ENCODE measurements at regions of chr9 and their contacts with region 1.

Region 1: DNA sequence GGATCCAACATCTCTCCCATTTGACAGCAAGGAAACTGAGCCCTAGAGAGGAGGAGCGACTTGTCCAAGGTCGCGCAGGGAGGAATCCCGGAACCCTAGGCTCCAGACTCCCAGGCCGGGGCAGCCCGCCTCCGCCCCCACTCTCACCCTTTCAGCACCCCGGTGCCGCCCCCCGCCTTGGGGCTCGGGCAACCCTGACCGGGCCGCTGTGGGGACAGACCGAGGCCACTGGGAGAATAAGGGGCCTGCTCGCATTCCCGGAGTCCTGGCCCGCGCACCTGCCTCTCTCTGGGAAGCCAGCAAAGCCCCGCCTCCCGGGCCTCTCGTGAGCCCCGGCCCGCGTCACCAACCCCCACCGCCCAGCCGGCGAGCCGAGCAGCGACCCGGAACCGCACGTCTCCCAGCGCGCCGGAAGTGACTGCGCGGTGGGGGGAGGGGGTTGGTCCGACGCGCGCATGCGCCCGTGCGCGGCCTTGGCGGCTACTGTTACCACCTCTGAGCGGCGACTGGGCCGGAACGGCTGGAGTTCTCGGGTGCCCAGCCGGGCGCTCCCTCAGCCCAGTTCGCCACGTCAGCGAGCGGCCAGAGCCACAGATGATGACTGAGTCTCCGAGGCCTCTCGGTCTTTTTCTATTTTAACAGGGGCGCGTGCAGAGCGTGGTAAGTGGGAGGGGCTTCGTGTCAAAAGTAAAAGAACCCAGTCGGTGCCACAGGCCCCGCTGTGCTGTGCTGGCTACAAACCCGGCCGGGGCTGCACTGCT is at the start of gene GOLGA1:
- DNase-seq: peak; percentile 94
- ATAC-seq: peak; percentile 86
- H3K4me3 Mint-ChIP-seq: peak within 1 kb of the TSS; percentile 99
- H3K27ac Mint-ChIP-seq: peak within 1 kb of the TSS; percentile 98
- H3K4me1 Mint-ChIP-seq: peaks cover 24% of the 10 kb centered on the region
- H3K27me3 Mint-ChIP-seq: no peaks in the 10 kb centered on the region
- total RNA-seq, gene GOLGA1: 23.4 to 26.8 TPM

Region 2: DNA sequence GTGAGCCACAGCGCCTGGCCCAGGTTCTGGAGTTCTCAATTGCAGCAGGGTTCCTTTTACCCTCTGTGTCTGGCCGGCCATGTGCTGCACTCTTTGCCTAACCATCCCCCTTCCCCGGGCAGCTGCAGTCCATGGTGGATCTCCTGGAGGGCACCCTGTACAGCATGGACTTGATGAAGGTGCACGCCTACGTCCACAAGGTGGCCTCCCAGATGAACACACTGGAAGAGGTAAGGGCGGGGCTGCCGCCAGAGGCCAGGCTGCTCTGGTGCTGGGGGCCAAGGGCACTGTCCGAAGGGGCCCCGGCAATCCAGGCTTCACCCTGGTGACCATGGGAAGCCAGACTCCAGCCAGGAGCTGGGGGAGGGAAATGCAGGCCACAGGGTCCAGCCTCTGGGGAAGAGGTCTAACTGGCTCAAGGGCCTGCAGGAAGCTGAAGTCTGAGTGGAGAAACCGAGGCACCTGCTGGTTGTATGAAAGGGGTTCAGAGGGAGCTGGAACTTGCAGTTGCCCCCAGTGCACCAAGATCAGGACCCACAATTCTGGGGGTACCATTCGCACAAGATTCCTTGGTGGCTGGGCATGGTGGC is 145.9 kb before region 1 on chr9:
- POLR2A ChIA-PET with region 1: no interaction called
- DNase-seq: no peak
- ATAC-seq: no peak
- H3K4me3 Mint-ChIP-seq: no peak overlapping the region
- H3K27ac Mint-ChIP-seq: no peak overlapping the region
- H3K4me1 Mint-ChIP-seq: peaks cover 3% of the 10 kb centered on the region
- H3K27me3 Mint-ChIP-seq: peaks cover 23% of the 10 kb centered on the region

Region 3: DNA sequence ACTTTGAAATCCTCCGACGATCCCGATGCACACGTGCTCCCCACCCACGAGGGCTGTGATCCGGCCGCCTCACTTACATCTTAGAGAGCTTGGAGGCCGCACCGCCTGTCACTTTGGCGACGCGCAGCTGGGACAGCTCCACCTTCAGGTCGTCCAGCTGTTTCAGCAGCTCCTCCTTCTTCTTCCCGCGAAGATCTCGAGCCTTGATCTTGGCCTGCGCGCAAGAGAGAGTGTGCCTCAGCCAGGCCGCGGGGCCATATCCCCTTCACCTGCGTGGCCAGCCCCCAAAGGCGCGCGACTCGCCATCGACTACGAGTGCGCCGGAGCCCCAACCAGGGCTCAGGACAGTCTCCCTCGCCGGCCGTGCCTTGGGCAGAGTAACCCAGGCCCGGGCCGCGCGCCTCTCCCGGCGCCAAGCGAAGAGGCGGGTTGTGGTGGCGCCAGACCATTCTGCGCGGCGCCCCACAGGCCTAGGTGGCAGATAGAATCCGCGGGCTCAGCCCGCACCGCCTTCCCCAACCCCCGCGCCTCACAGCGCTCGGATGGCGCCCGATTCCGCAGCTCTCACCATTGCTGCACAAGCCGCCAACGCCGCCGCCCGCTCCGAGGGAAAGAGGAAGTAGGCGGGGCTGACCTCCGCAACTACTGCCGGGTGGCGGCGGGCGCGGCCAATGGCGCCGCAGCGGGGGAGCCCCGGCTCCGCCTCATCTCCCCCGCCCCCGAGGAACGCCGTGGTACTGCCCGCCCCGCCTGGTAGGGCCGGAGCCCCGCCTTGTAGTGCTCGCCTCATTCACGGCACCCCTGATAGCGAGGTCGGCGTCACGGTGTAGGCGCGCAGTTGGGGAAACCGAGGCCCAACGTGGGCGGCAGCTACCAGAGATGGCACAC is 79.3 kb before region 1 on chr9 and contains the starts of genes ARPC5L and RPL35:
- POLR2A ChIA-PET with region 1: interaction called, 18 read pairs
- DNase-seq: peak; percentile 97
- ATAC-seq: peak; percentile 95
- H3K4me3 Mint-ChIP-seq: peak within 1 kb of the TSS; percentile 91
- H3K27ac Mint-ChIP-seq: peak within 1 kb of the TSS; percentile 98
- H3K4me1 Mint-ChIP-seq: peaks cover 23% of the 10 kb centered on the region
- H3K27me3 Mint-ChIP-seq: no peaks in the 10 kb centered on the region
- total RNA-seq, gene ARPC5L: 68.2 to 70.2 TPM
- total RNA-seq, gene RPL35: 1,398 to 1,411 TPM

Region 4: GRCh38 chr9:124868511-124869465 is 72.1 kb before region 1 on chr9:
- POLR2A ChIA-PET with region 1: interaction called, 10 read pairs
- DNase-seq: peak; percentile 97
- ATAC-seq: peak; percentile 72
- H3K4me3 Mint-ChIP-seq: peak overlapping the region; percentile 98
- H3K27ac Mint-ChIP-seq: peak overlapping the region; percentile 98
- H3K4me1 Mint-ChIP-seq: peaks cover 38% of the 10 kb centered on the region
- H3K27me3 Mint-ChIP-seq: no peaks in the 10 kb centered on the region

Region 5: GRCh38 chr9:124964604-124965003 is 23.7 kb after region 1 on chr9:
- POLR2A ChIA-PET with region 1: interaction called, 28 read pairs
- DNase-seq: no peak
- ATAC-seq: no peak
- H3K4me3 Mint-ChIP-seq: peak overlapping the region; percentile 9
- H3K27ac Mint-ChIP-seq: peak overlapping the region; percentile 92
- H3K4me1 Mint-ChIP-seq: peaks cover 18% of the 10 kb centered on the region
- H3K27me3 Mint-ChIP-seq: no peaks in the 10 kb centered on the region

Region 6: GRCh38 chr9:125143375-125144090 is 202.7 kb after region 1 on chr9 and contains the start of gene SCAI:
- POLR2A ChIA-PET with region 1: interaction called, 14 read pairs
- DNase-seq: peak; percentile 95
- ATAC-seq: peak; percentile 100
- H3K4me3 Mint-ChIP-seq: peak within 1 kb of the TSS; percentile 96
- H3K27ac Mint-ChIP-seq: peak within 1 kb of the TSS; percentile 84
- H3K4me1 Mint-ChIP-seq: peaks cover 21% of the 10 kb centered on the region
- H3K27me3 Mint-ChIP-seq: no peaks in the 10 kb centered on the region
- total RNA-seq, gene SCAI: 12.6 to 12.8 TPM